Natural killer cell (primary cell): ENCODE measurements at regions of chr5 and their contacts with region 1.

Region 1: GRCh38 chr5:157743163-157744050 is at the start of gene LSM11:
- DNase-seq: peak; percentile 93 to 94
- ATAC-seq: peak; percentile 98 to 100 (median 98)
- H3K4me3 ChIP-seq: peak within 1 kb of the TSS; percentile 49
- H3K4me3 Mint-ChIP-seq: peak within 1 kb of the TSS; percentile 96
- H3K27ac ChIP-seq: no peak within 1 kb of the TSS
- H3K27ac Mint-ChIP-seq: peak within 1 kb of the TSS; percentile 36 to 70
- H3K4me1 ChIP-seq: peaks cover 12% of the 10 kb centered on the region
- H3K4me1 Mint-ChIP-seq: peaks cover 16 to 24% of the 10 kb centered on the region in 2 donors
- H3K27me3 ChIP-seq: no peaks in the 10 kb centered on the region
- H3K27me3 Mint-ChIP-seq: no peaks in the 10 kb centered on the region
- CTCF ChIP-seq: peak; percentile 100
- total RNA-seq, gene LSM11: 1.2 to 2.3 (median 2.0) TPM

Region 2: GRCh38 chr5:157328277-157328912 is 415.0 kb before region 1 on chr5:
- intact Hi-C with region 1: loop called (anchors 1 kb)
- DNase-seq: peak in 1 of 2 donors; percentile 86
- ATAC-seq: peak; percentile 96 to 99 (median 98)
- H3K4me3 ChIP-seq: no peak overlapping the region
- H3K4me3 Mint-ChIP-seq: no peak overlapping the region
- H3K27ac ChIP-seq: no peak overlapping the region
- H3K27ac Mint-ChIP-seq: peak overlapping the region; percentile 67 to 70
- H3K4me1 ChIP-seq: no peaks in the 10 kb centered on the region
- H3K4me1 Mint-ChIP-seq: peaks cover 13 to 15% of the 10 kb centered on the region in 2 donors
- H3K27me3 ChIP-seq: no peaks in the 10 kb centered on the region
- H3K27me3 Mint-ChIP-seq: no peaks in the 10 kb centered on the region
- CTCF ChIP-seq: peak; percentile 93

Region 3: GRCh38 chr5:157431544-157432200 is 311.7 kb before region 1 on chr5:
- intact Hi-C with region 1: loop called (anchors 1 kb)
- DNase-seq: peak in 1 of 2 donors; percentile 73
- ATAC-seq: peak; percentile 80 to 83 (median 82)
- H3K4me3 ChIP-seq: no peak overlapping the region
- H3K4me3 Mint-ChIP-seq: no peak overlapping the region
- H3K27ac ChIP-seq: no peak overlapping the region
- H3K27ac Mint-ChIP-seq: no peak overlapping the region
- H3K4me1 ChIP-seq: no peaks in the 10 kb centered on the region
- H3K4me1 Mint-ChIP-seq: no peaks in the 10 kb centered on the region
- H3K27me3 ChIP-seq: no peaks in the 10 kb centered on the region
- H3K27me3 Mint-ChIP-seq: peaks cover 18 to 53% of the 10 kb centered on the region in 2 donors
- CTCF ChIP-seq: peak; percentile 56

Region 4: GRCh38 chr5:157670662-157671591 is 72.5 kb before region 1 on chr5 and contains the start of gene C5orf52:
- intact Hi-C with region 1: loop called (anchors 5 kb)
- DNase-seq: peak in 1 of 2 donors; percentile 29
- ATAC-seq: peak; percentile 47 to 51 (median 47)
- H3K4me3 ChIP-seq: peak within 1 kb of the TSS; percentile 41
- H3K4me3 Mint-ChIP-seq: peak within 1 kb of the TSS; percentile 82
- H3K27ac ChIP-seq: no peak within 1 kb of the TSS
- H3K27ac Mint-ChIP-seq: peak within 1 kb of the TSS in 1 of 2 donors; percentile 73
- H3K4me1 ChIP-seq: peaks cover 13% of the 10 kb centered on the region
- H3K4me1 Mint-ChIP-seq: peaks cover 24 to 27% of the 10 kb centered on the region in 2 donors
- H3K27me3 ChIP-seq: peaks cover 21% of the 10 kb centered on the region
- H3K27me3 Mint-ChIP-seq: peaks cover 43 to 52% of the 10 kb centered on the region in 2 donors
- CTCF ChIP-seq: no peak
- total RNA-seq, gene C5orf52: not detected

Region 5: GRCh38 chr5:157731272-157732129 is 11.9 kb before region 1 on chr5 and contains the start of gene THG1L:
- intact Hi-C with region 1: loop called (anchors 1 kb)
- DNase-seq: peak; percentile 95 to 97
- ATAC-seq: peak; percentile 94 to 97 (median 96)
- H3K4me3 ChIP-seq: peak within 1 kb of the TSS; percentile 85
- H3K4me3 Mint-ChIP-seq: peak within 1 kb of the TSS; percentile 96
- H3K27ac ChIP-seq: peak within 1 kb of the TSS; percentile 82
- H3K27ac Mint-ChIP-seq: peak within 1 kb of the TSS; percentile 92 to 95
- H3K4me1 ChIP-seq: peaks cover 8% of the 10 kb centered on the region
- H3K4me1 Mint-ChIP-seq: peaks cover 13 to 14% of the 10 kb centered on the region in 2 donors
- H3K27me3 ChIP-seq: no peaks in the 10 kb centered on the region
- H3K27me3 Mint-ChIP-seq: no peaks in the 10 kb centered on the region
- CTCF ChIP-seq: no peak
- total RNA-seq, gene THG1L: 3.1 to 4.7 (median 3.5) TPM

Region 6: DNA sequence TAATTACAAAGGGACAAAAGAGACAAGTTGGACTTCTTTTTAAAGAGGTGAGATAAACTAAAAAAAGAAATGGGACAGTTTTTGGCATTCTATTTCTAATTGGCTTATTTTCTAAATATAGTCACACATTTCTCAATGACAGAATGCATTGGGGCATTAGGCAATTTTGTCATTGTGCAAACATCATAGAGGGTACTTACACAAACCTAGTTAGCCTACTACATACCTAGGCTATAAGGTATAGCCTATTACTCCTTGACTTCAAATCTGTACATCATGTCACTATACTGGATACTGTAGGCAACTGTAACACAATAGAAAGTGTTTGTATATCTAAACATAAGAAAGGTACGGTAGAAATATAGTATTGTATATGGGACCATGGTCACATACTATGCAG is 56.2 kb after region 1 on chr5:
- intact Hi-C with region 1: no loop called
- DNase-seq: no peak
- ATAC-seq: no peak
- H3K4me3 ChIP-seq: no peak overlapping the region
- H3K4me3 Mint-ChIP-seq: no peak overlapping the region
- H3K27ac ChIP-seq: no peak overlapping the region
- H3K27ac Mint-ChIP-seq: peak overlapping the region in 1 of 2 donors; percentile 46
- H3K4me1 ChIP-seq: no peaks in the 10 kb centered on the region
- H3K4me1 Mint-ChIP-seq: peaks cover 0 to 5% of the 10 kb centered on the region in 2 donors
- H3K27me3 ChIP-seq: no peaks in the 10 kb centered on the region
- H3K27me3 Mint-ChIP-seq: no peaks in the 10 kb centered on the region
- CTCF ChIP-seq: no peak

Region 7: DNA sequence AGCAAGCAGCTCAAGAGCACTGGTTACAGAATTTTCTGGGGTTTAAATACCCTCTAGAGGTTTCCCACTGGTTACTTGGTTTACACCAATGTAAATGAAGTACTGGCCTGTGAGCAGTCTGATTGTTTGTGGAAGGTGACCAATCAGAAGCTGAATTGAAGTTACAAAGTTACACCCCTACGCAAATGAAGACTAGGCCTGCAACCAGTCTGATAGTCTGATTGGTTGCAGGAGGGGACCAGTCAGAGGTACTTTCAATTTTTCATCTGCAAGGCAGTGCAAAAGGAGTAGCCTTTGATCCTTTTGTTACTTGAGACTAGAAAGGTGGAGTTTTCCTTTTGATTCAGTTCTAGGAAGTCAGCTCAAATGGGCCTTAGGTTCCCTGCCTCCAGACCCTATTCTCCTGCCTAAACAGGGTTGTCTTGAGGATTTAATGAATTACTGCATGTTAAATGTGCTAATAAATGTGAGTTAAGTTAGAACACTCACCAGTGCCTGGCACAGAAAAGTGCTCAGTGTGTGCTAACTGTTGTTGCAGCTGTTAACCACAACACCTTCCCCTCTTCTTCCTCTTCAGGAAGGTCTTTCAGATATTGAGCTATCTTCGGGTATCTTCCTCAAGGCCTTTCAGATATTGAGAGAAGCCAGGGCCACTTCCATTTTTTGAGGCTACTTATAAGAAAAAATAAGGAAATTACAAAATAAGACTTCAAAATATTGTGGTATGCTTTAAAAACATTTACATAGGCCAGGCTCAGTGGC is 147.6 kb after region 1 on chr5:
- intact Hi-C with region 1: no loop called
- DNase-seq: peak in 1 of 2 donors; percentile 34
- ATAC-seq: peak; percentile 35 to 85 (median 74)
- H3K4me3 ChIP-seq: no peak overlapping the region
- H3K4me3 Mint-ChIP-seq: no peak overlapping the region
- H3K27ac ChIP-seq: peak overlapping the region; percentile 37
- H3K27ac Mint-ChIP-seq: peak overlapping the region; percentile 45 to 60
- H3K4me1 ChIP-seq: peaks cover 8% of the 10 kb centered on the region
- H3K4me1 Mint-ChIP-seq: peaks cover 0 to 10% of the 10 kb centered on the region in 2 donors
- H3K27me3 ChIP-seq: no peaks in the 10 kb centered on the region
- H3K27me3 Mint-ChIP-seq: no peaks in the 10 kb centered on the region
- CTCF ChIP-seq: no peak

Region 8: GRCh38 chr5:157994906-157995519 is 251.6 kb after region 1 on chr5:
- intact Hi-C with region 1: no loop called
- DNase-seq: peak in 1 of 2 donors; percentile 68
- ATAC-seq: peak; percentile 69 to 87 (median 77)
- H3K4me3 ChIP-seq: no peak overlapping the region
- H3K4me3 Mint-ChIP-seq: peak overlapping the region; percentile 40
- H3K27ac ChIP-seq: no peak overlapping the region
- H3K27ac Mint-ChIP-seq: no peak overlapping the region
- H3K4me1 ChIP-seq: peaks cover 19% of the 10 kb centered on the region
- H3K4me1 Mint-ChIP-seq: peaks cover 12 to 13% of the 10 kb centered on the region in 2 donors
- H3K27me3 ChIP-seq: peaks cover 22% of the 10 kb centered on the region
- H3K27me3 Mint-ChIP-seq: peaks cover 35 to 61% of the 10 kb centered on the region in 2 donors
- CTCF ChIP-seq: peak; percentile 58

Region 9: GRCh38 chr5:158414780-158415179 is 671.4 kb after region 1 on chr5:
- intact Hi-C with region 1: no loop called
- DNase-seq: no peak
- ATAC-seq: no peak
- H3K4me3 ChIP-seq: no peak overlapping the region
- H3K4me3 Mint-ChIP-seq: no peak overlapping the region
- H3K27ac ChIP-seq: no peak overlapping the region
- H3K27ac Mint-ChIP-seq: no peak overlapping the region
- H3K4me1 ChIP-seq: no peaks in the 10 kb centered on the region
- H3K4me1 Mint-ChIP-seq: no peaks in the 10 kb centered on the region
- H3K27me3 ChIP-seq: no peaks in the 10 kb centered on the region
- H3K27me3 Mint-ChIP-seq: no peaks in the 10 kb centered on the region
- CTCF ChIP-seq: no peak